ENCODE measurements at regions of chr4 and their contacts with region 1.

Region 1: DNA sequence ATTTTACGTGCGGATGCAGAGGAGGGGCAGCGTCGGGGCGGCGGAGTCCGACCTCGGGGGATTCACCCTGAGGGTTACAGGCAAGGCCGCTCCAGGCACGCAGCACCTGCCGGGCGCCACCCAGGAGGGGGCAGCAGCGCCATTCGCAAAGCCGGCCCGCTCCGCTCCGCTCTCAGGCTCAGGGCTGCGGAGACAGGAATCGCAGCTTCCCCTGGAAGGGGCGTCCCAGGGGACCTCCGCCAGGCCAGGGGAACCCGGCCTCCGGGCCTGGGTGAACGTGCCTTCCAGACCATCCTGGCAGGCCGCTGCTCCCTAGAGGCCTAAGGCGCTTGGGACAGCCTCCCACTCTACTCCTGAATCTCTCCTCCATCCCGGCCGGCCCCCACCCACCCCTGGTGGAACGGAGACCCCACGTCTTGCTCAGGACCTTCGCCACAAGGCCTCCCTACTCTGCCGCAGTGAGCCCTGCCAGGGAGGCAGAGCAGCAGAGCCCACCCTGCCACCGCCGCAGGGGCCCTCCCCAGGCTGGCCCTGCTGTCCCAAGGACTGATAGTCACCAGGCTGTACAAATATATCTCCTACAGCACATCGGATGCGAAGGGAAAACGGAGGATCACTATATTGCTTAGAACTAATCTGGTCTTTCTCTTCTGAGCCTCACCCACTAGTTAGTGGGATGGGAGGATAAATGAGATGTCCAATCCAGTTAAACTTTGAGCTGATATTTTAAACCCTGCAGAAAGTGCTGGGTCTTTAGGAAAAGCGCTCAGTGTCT is 115.0 kb downstream of the SMIM20 start:
- DNase-seq: peak; percentile 93
- H3K4me3 Mint-ChIP-seq: peak overlapping the region; percentile 22
- H3K27ac Mint-ChIP-seq: peak overlapping the region; percentile 47
- H3K4me1 Mint-ChIP-seq: peaks cover 18% of the 10 kb centered on the region
- H3K27me3 Mint-ChIP-seq: no peaks in the 10 kb centered on the region

Region 2: GRCh38 chr4:25993395-25994185 is 35.4 kb before region 1 on chr4:
- intact Hi-C with region 1: loop called (anchors 2 kb)
- DNase-seq: peak; percentile 60
- H3K4me3 Mint-ChIP-seq: no peak overlapping the region
- H3K27ac Mint-ChIP-seq: no peak overlapping the region
- H3K4me1 Mint-ChIP-seq: peaks cover 13% of the 10 kb centered on the region
- H3K27me3 Mint-ChIP-seq: no peaks in the 10 kb centered on the region

Region 3: GRCh38 chr4:26088433-26088928 is 59.5 kb after region 1 on chr4:
- intact Hi-C with region 1: loop called (anchors 2 kb)
- DNase-seq: peak; percentile 77
- H3K4me3 Mint-ChIP-seq: peak overlapping the region; percentile 80
- H3K27ac Mint-ChIP-seq: peak overlapping the region; percentile 99
- H3K4me1 Mint-ChIP-seq: peaks cover 68% of the 10 kb centered on the region
- H3K27me3 Mint-ChIP-seq: no peaks in the 10 kb centered on the region

Region 4: GRCh38 chr4:26130173-26130572 is 101.2 kb after region 1 on chr4:
- intact Hi-C with region 1: loop called (anchors 5 kb)
- DNase-seq: peak; percentile 67
- H3K4me3 Mint-ChIP-seq: peak overlapping the region; percentile 51
- H3K27ac Mint-ChIP-seq: peak overlapping the region; percentile 76
- H3K4me1 Mint-ChIP-seq: peaks cover 59% of the 10 kb centered on the region
- H3K27me3 Mint-ChIP-seq: no peaks in the 10 kb centered on the region

Region 5: GRCh38 chr4:26325191-26325590 is 296.2 kb after region 1 on chr4:
- intact Hi-C with region 1: loop called (anchors 2 kb)
- DNase-seq: peak; percentile 82
- H3K4me3 Mint-ChIP-seq: peak overlapping the region; percentile 98
- H3K27ac Mint-ChIP-seq: peak overlapping the region; percentile 86
- H3K4me1 Mint-ChIP-seq: peaks cover 44% of the 10 kb centered on the region
- H3K27me3 Mint-ChIP-seq: no peaks in the 10 kb centered on the region

Region 6: GRCh38 chr4:26410385-26411293 is 381.7 kb after region 1 on chr4:
- intact Hi-C with region 1: loop called (anchors 1 kb)
- DNase-seq: peak; percentile 85
- H3K4me3 Mint-ChIP-seq: no peak overlapping the region
- H3K27ac Mint-ChIP-seq: no peak overlapping the region
- H3K4me1 Mint-ChIP-seq: peaks cover 17% of the 10 kb centered on the region
- H3K27me3 Mint-ChIP-seq: no peaks in the 10 kb centered on the region

Region 7: DNA sequence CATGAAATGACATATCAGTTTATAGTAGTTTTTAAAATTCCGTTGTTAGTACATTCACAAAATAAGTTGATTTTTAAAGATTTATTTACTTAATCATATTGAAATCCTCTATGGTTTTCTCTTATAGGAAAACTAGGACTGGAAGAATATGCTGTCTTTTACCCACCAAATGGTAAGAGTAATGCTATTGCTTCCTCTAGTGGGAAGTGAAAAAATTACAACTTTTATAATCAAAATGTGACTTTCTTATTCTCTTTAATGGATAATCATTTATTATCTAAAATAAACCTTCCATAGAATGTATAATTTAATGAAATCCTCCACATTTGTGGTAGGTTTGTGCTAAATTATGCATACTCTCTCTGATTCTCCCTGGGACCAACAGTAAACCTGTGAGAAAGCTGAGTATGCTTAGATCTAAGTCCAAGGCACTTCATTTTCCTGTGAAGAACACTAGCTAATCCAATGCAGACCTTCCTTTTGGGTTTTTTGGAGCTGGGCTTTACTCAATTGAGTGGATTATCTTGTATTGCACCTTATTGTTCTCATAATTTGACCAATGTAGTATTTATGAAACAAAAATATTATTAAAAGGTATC is 691.1 kb after region 1 on chr4:
- intact Hi-C with region 1: loop called (anchors 10 kb)
- DNase-seq: no peak
- H3K4me3 Mint-ChIP-seq: no peak overlapping the region
- H3K27ac Mint-ChIP-seq: no peak overlapping the region
- H3K4me1 Mint-ChIP-seq: no peaks in the 10 kb centered on the region
- H3K27me3 Mint-ChIP-seq: no peaks in the 10 kb centered on the region

Measured in activated CD4-positive, alpha-beta T cell treated with anti-CD3 and anti-CD28 coated beads, Interleukin-2, amount 10 ng/mL, durations not matched to agents 24 days and 14 days (primary cell).